Activated CD8-positive, alpha-beta memory T cell treated with anti-CD3 and anti-CD28 coated beads, Interleukin-2, amount 10 ng/mL, durations not matched to agents 7 days and 5 days (primary cell): ENCODE measurements at regions of chr5 and their contacts with region 1.

Region 1: DNA sequence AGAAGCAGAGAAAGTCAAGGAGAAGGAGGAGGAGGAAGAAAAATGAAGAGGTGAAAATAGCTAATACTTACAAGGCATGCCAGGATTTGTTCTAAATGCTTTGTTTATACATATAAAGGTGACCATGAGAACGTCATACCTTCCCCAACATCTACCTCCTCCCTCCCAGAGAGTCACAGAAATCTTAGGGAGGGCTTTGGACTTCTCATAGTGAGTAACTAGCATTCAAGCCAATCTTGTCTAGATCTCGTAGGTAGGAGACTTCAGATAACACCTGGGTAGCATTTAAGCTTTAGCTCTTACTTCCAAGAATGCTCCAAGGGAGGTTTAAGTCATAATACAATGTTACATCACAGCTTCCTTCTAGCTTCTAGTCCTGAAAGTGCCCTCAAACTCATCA is 36.5 kb upstream of the GPBP1 start:
- DNase-seq: no peak
- ATAC-seq: no peak
- H3K4me3 Mint-ChIP-seq: no peak overlapping the region
- H3K27ac Mint-ChIP-seq: no peak overlapping the region
- H3K4me1 Mint-ChIP-seq: peaks cover 2% of the 10 kb centered on the region
- H3K27me3 Mint-ChIP-seq: peaks cover 15% of the 10 kb centered on the region

Region 2: DNA sequence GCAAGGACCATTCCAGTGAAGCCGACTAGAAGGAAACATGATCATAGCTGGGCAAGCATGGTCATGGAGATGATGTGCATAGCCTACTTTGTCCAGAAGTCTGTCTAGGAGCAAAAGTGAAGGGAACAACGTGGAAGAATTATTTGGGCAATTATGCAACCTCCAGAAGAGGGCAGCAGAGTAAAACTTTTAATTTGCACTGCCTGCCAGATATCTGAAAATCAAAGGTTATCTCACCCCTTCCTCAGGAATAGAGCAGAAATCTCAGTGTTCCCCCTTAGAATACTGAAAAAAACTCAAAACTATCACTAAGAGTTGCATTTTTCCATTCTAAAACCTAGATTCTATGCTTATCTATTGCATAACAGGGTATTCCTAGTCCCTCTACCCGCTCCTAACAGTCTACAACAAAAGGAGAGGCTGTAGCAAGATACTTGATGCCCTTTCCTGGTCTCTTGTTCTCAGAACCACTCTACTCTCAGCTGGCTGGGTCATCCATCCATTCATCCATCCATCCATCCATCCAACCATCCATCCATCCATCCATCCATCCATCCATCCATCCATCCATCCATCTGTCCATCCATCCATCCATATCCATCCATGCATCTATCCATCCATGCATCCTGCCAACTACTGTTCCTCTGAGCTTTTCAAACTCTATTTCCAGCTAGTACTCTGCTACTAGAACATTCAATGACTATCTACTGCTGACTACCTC is 236.4 kb before region 1 on chr5:
- CTCF ChIA-PET with region 1: interaction called, 33 read pairs
- DNase-seq: no peak
- ATAC-seq: peak; percentile 68
- H3K4me3 Mint-ChIP-seq: no peak overlapping the region
- H3K27ac Mint-ChIP-seq: no peak overlapping the region
- H3K4me1 Mint-ChIP-seq: no peaks in the 10 kb centered on the region
- H3K27me3 Mint-ChIP-seq: peaks cover 11% of the 10 kb centered on the region

Region 3: GRCh38 chr5:57221049-57221568 is 83.7 kb after region 1 on chr5:
- CTCF ChIA-PET with region 1: interaction called, 16 read pairs
- DNase-seq: no peak
- ATAC-seq: peak; percentile 72
- H3K4me3 Mint-ChIP-seq: no peak overlapping the region
- H3K27ac Mint-ChIP-seq: peak overlapping the region; percentile 41
- H3K4me1 Mint-ChIP-seq: peaks cover 25% of the 10 kb centered on the region
- H3K27me3 Mint-ChIP-seq: no peaks in the 10 kb centered on the region